Activated CD4-positive, alpha-beta memory T cell treated with anti-CD3 and anti-CD28 coated beads, Interleukin-2, amount 10 ng/mL, durations not matched to agents 7 days and 5 days (primary cell): ENCODE measurements at regions of chr4 and their contacts with region 1.

Region 1: DNA sequence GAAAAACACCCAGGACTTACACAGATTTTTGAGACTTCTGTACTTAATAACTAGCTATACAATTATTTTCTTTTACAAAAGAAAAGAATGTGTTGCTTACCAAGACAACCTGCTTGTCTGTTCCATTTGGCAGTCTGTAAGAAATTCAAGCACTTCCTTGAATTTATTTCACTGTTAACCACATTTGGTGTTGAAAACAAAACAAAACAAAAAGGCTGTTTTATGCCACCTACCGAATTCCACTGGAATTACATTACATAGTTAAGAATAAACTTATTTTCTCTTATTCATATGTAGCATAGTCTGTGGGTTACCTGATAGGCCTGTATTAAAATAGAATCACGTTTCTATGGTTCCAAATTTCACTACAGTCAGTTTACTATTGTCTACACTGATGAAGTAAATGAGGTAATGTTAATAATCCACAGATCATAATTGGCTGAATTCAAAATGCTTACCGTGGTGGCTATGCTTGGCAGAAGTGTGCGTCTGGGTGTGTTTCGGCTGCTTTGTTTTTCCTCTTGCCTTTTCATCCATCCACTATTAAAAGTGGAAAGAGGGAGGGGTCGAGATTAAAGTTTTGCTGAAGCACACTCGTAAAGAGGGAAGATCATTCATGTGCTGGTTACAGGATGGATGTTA is at the start of gene TLR1:
- DNase-seq: no peak
- H3K4me3 Mint-ChIP-seq: peak within 1 kb of the TSS; percentile 80
- H3K27ac Mint-ChIP-seq: peak within 1 kb of the TSS; percentile 85
- H3K4me1 Mint-ChIP-seq: peaks cover 37% of the 10 kb centered on the region
- H3K27me3 Mint-ChIP-seq: no peaks in the 10 kb centered on the region
- total RNA-seq, gene TLR1: 11.7 to 12.0 TPM

Region 2: GRCh38 chr4:38759113-38759789 is 45.5 kb before region 1 on chr4:
- CTCF ChIA-PET with region 1: interaction called, 53 read pairs
- POLR2A ChIA-PET with region 1: interaction called, 8 read pairs
- DNase-seq: peak; percentile 61
- H3K4me3 Mint-ChIP-seq: no peak overlapping the region
- H3K27ac Mint-ChIP-seq: no peak overlapping the region
- H3K4me1 Mint-ChIP-seq: peaks cover 21% of the 10 kb centered on the region
- H3K27me3 Mint-ChIP-seq: no peaks in the 10 kb centered on the region

Region 3: DNA sequence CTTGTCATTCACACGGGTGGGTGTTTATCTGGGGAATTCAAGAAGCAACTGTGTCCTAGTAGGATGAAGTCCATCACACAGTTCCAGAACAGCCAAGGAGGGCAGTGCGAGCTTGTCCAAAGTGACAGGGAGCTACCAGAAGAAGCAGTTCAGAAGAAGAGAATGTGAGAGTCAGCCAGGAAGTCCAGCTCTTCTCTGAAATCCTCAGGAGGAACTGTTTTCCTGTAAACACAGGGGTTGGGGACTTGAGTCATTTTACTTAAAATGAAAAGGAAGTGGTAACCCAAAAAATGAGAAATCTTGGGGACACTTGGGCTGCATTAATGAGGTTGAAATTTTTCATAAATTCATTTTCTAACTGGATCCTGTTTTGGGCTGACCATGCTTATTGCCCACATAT is 13.8 kb before region 1 on chr4:
- CTCF ChIA-PET with region 1: interaction called, 11 read pairs
- POLR2A ChIA-PET with region 1: interaction called, 10 read pairs
- DNase-seq: no peak
- H3K4me3 Mint-ChIP-seq: no peak overlapping the region
- H3K27ac Mint-ChIP-seq: peak overlapping the region; percentile 43
- H3K4me1 Mint-ChIP-seq: peaks cover 14% of the 10 kb centered on the region
- H3K27me3 Mint-ChIP-seq: no peaks in the 10 kb centered on the region

Region 4: GRCh38 chr4:39103291-39103690 is 298.5 kb after region 1 on chr4:
- CTCF ChIA-PET with region 1: no interaction called
- POLR2A ChIA-PET with region 1: no interaction called
- DNase-seq: no peak
- H3K4me3 Mint-ChIP-seq: no peak overlapping the region
- H3K27ac Mint-ChIP-seq: no peak overlapping the region
- H3K4me1 Mint-ChIP-seq: no peaks in the 10 kb centered on the region
- H3K27me3 Mint-ChIP-seq: no peaks in the 10 kb centered on the region